Left cardiac atrium (tissue), 4 donors: ENCODE measurements at regions of chr14 and their contacts with region 1.

Region 1: DNA sequence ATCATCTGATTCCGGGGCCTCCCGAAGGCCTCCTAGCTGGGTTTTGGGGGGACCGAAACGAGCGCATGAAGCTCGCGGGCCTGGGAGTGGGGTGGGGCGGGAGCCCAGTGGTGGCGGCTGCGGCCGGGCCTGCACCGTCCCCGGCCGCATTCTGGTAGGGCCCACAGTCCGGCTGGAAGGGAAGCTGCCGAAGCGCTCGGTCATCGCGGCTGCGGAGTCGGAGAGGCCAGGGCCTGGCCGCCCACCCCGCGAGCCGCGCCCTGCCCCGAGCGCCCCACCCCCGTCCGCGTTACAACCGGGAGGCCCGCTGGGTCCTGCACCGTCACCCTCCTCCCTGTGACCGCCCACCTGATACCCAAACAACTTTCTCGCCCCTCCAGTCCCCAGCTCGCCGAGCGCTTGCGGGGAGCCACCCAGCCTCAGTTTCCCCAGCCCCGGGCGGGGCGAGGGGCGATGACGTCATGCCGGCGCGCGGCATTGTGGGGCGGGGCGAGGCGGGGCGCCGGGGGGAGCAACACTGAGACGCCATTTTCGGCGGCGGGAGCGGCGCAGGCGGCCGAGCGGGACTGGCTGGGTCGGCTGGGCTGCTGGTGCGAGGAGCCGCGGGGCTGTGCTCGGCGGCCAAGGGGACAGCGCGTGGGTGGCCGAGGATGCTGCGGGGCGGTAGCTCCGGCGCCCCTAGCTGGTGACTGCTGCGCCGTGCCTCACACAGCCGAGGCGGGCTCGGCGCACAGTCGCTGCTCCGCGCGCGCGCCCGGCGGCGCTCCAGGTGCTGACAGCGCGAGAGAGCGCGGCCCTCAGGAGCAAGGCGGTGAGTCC is at the start of gene KLC1:
- DNase-seq: peak; percentile 88
- ATAC-seq: peak; percentile 86 to 93
- total RNA-seq, gene KLC1: 118 to 139 TPM

Region 2: DNA sequence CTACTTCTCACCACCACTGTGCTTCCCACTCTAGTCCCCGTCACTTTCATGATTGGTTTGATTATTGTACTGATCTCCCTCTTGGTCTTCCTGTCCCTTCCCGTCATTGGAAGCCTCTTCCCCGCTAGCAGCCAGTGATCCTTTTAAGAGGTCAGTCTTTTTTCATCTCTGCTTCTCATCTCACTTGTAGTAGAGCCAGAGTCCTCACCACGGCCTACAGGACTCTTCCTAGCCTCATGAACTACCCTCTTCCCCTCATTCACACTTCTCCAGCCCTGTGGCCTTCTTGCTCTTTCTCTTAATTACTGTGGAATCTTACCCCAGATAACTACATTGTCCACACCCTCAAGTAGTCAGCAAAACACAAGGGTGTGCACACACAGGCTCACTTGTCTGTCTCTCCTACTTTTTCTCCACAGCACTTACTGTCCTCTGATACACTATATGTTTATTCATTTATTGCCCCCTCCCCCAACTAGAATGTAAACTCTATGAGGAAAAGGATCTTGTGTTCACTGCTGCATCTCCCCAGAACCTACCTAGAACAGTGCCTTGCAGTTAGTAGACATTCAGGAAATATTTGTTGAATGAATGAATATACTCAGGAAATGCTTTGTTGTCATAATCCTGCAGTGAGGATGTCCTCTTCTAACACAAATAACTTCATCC is 172.6 kb before region 1 on chr14:
- intact Hi-C with region 1: no loop called
- DNase-seq: no peak
- ATAC-seq: peak in 1 of 2 donors; percentile 14

Region 3: GRCh38 chr14:103696466-103697071 is 67.7 kb after region 1 on chr14:
- intact Hi-C with region 1: loop called in 1 of 2 experiments (anchors 10 kb)
- DNase-seq: peak; percentile 52
- ATAC-seq: peak; percentile 40 to 52